ENCODE measurements at regions of chr20 and their contacts with region 1.

Region 1: GRCh38 chr20:20860078-20860806 is 147.8 kb upstream of the RALGAPA2 start:
- DNase-seq: peak; percentile 87 to 92
- H3K4me3 ChIP-seq: no peak overlapping the region
- H3K4me3 Mint-ChIP-seq: no peak overlapping the region
- H3K27ac Mint-ChIP-seq: no peak overlapping the region
- H3K4me1 ChIP-seq: no peaks in the 10 kb centered on the region; the same call in 1 of the 2 replicates
- H3K4me1 Mint-ChIP-seq: no peaks in the 10 kb centered on the region
- H3K27me3 ChIP-seq: no peaks in the 10 kb centered on the region
- H3K27me3 Mint-ChIP-seq: peaks cover 4% of the 10 kb centered on the region
- CTCF ChIP-seq: peak; percentile 88 to 96

Region 2: DNA sequence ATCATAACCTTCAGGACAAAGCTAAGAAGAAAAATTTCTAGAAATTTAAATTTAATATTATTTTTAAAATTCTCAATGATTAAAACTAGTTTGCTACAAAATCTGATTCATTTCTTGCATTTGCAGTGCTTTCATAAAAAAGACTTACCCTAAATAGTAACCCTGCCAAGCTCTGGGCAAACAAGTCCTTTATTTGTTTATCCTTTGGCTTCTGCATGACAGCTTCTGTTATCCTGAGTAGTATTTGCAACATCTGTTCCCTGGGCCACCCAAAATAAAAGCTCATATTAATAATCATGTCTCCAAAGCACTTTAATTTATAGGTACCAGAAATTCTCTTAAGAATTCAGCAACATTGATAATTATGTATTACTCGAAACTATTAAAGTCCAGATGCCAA is 249.1 kb before region 1 on chr20:
- CTCF ChIA-PET with region 1: no interaction called
- POLR2A ChIA-PET with region 1: no interaction called
- intact Hi-C with region 1: no loop called
- DNase-seq: no peak
- H3K4me3 ChIP-seq: no peak overlapping the region
- H3K4me3 Mint-ChIP-seq: no peak overlapping the region
- H3K27ac Mint-ChIP-seq: no peak overlapping the region
- H3K4me1 ChIP-seq: peaks cover 9% of the 10 kb centered on the region; the same call in 1 of the 2 replicates
- H3K4me1 Mint-ChIP-seq: peaks cover 13% of the 10 kb centered on the region
- H3K27me3 ChIP-seq: no peaks in the 10 kb centered on the region
- H3K27me3 Mint-ChIP-seq: no peaks in the 10 kb centered on the region
- CTCF ChIP-seq: no peak

Region 3: DNA sequence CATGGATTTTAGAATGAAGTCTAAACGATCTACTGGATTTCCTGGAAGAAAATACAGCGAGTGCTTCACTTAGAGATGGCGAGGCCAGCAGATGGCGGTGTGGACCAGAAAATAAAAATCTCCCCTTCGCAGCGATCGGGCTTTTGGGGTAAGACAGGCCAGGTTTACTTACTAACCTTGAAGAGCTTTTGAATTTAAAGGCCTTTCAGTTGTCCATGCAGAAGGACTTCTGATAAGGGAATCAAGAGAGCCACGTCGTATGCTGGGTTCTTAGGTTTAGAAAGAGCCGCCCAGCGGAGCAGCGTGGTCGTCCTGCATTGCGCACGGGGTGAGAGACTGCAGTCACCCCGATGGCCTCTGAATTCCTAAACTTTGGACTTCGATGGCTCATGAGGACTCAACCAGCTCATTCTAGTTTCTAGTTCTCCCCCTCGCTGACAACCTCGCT is 22.6 kb before region 1 on chr20:
- CTCF ChIA-PET with region 1: interaction called, 11 read pairs
- POLR2A ChIA-PET with region 1: no interaction called
- intact Hi-C with region 1: loop called (anchors 1 kb)
- DNase-seq: peak; percentile 68 to 75
- H3K4me3 ChIP-seq: 0 out of 2 replicates have a peak overlapping the region, but pooled peaks have one; percentile 15
- H3K4me3 Mint-ChIP-seq: peak overlapping the region; percentile 5
- H3K27ac Mint-ChIP-seq: no peak overlapping the region
- H3K4me1 ChIP-seq: no peaks in the 10 kb centered on the region
- H3K4me1 Mint-ChIP-seq: peaks cover 6% of the 10 kb centered on the region
- H3K27me3 ChIP-seq: no peaks in the 10 kb centered on the region
- H3K27me3 Mint-ChIP-seq: peaks cover 7% of the 10 kb centered on the region
- CTCF ChIP-seq: peak; percentile 80 to 82

Region 4: DNA sequence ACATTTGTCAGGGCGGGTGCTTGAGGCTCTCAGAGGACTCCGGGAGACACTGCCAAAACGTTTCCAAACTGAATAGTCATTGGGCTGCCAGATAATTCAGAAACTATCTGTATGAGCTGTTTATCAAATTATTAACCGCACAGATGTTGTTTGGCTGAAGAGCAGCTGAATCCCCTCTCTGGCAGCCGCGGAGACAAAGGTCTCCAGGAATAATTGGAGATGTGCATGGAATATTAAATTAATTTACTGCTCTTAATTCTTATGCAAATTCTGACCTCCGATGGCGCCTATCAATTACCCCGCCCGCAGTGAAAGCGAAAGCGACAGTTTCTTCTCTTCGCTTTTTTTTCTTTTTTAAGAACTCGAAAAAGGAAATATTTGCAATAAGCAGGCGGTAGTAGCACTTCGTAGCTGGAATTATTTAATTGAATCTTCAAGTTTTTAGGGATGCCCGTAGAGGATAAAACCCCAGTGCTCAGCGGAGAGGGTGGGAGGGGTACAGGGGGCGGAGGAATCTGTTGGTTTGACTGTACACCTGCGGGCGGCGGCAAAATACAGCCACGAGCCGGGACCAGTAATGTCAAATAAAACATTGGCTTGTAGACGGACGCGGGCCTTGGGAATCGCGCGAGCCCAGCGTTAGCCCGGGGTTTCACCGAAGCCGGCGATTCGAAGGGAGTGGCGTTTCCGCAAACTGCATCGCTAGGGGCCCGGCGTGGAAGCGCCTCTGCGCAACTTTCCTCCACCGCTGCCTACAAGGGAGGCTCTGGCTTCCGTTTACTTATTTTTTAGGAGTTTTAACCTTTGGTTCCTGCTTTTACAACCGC is 239.7 kb after region 1 on chr20:
- CTCF ChIA-PET with region 1: interaction called, 7 read pairs
- POLR2A ChIA-PET with region 1: no interaction called
- intact Hi-C with region 1: loop called (anchors 1 kb)
- DNase-seq: peak; percentile 78 to 83
- H3K4me3 ChIP-seq: peak overlapping the region; percentile 56
- H3K4me3 Mint-ChIP-seq: peak overlapping the region; percentile 97
- H3K27ac Mint-ChIP-seq: peak overlapping the region; percentile 100
- H3K4me1 ChIP-seq: no peaks in the 10 kb centered on the region; the same call in 1 of the 2 replicates
- H3K4me1 Mint-ChIP-seq: peaks cover 6% of the 10 kb centered on the region
- H3K27me3 ChIP-seq: no peaks in the 10 kb centered on the region
- H3K27me3 Mint-ChIP-seq: peaks cover 4% of the 10 kb centered on the region
- CTCF ChIP-seq: no peak

Region 5: DNA sequence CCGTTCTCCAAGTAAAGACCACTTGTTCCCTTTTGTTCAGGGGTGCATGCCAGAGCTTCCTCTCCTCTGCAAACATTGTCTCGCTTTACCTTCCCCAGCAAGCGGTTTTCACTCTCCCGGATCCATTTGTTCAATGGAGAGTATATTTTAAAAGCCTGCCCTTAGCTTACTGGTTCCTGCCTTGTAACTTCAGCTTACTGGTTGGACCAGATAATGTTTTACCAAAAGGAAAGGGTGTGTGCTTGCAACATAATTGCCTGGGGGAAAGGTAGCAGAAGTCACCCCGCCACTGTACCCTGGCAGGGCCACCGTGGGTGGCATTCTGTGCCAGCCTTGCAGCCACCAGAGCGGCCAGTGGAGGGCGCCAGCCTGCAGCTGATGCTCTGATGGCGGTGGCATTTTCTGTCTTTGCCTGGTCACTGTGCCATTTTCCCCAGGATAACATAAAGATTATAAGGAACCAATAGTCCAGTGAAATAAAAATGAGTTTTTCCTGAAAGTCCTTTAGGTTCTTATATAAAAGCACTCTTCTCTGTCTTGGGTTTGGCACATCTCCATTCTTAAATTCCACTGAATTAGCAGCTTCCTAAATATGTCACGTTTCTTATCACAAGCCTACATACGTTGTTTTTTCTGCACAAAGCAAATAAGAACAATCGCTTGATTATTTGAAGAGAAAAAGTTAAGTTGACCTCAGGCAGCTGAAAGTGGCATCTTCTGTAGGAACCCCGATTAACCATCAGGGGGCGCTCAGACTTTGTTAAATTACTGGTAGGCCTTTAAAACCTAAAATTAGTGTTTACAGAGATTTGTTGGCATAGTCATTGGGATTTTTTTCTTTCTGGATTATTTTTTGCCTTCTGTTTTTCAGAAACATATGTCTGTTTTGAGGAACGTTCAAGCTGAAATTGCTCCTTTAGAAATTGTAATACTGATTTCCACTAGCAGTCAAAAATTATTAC is 375.5 kb after region 1 on chr20:
- CTCF ChIA-PET with region 1: interaction called, 4 read pairs
- POLR2A ChIA-PET with region 1: no interaction called
- intact Hi-C with region 1: loop called (anchors 2 kb)
- DNase-seq: peak; percentile 60 to 75
- H3K4me3 ChIP-seq: no peak overlapping the region
- H3K4me3 Mint-ChIP-seq: no peak overlapping the region
- H3K27ac Mint-ChIP-seq: no peak overlapping the region
- H3K4me1 ChIP-seq: no peaks in the 10 kb centered on the region
- H3K4me1 Mint-ChIP-seq: no peaks in the 10 kb centered on the region
- H3K27me3 ChIP-seq: no peaks in the 10 kb centered on the region
- H3K27me3 Mint-ChIP-seq: no peaks in the 10 kb centered on the region
- CTCF ChIP-seq: peak; percentile 70 to 87

Region 6: DNA sequence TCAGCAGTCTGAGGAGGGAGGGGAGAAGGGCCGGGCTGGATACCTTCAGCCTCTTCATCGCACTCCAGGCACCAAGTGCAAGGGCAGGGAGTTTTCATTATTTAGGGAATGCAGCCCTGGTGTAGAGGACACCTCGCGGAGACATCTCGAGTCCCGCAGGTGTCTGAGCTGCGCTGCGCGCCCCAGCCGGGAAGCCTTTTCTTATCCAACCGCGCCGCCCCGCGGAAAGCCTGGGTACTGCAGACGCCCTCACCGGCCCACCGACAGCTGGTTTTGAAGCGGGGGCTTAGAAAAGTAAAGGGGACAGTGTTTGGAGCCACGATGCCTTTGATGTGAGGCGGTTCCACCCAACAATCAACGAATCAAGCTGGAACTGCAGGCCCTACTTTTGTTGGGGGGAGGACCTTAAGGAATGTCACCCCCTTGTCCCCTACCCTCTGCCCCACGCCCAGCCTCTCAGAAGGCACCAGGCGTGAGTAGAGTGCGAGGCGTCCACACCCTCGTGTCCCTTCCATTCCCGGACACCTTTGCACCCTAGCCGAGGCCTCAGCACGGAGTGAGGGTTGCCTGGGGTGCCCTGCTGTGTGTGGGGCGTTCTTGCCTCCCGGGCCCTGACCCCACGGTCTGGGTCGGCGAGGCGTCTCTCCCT is 645.0 kb after region 1 on chr20:
- CTCF ChIA-PET with region 1: interaction called, 13 read pairs
- POLR2A ChIA-PET with region 1: no interaction called
- intact Hi-C with region 1: loop called (anchors 1 kb)
- DNase-seq: peak; percentile 74 to 89
- H3K4me3 ChIP-seq: peak overlapping the region; percentile 62
- H3K4me3 Mint-ChIP-seq: peak overlapping the region; percentile 47
- H3K27ac Mint-ChIP-seq: no peak overlapping the region
- H3K4me1 ChIP-seq: peaks cover 13% of the 10 kb centered on the region
- H3K4me1 Mint-ChIP-seq: no peaks in the 10 kb centered on the region
- H3K27me3 ChIP-seq: no peaks in the 10 kb centered on the region
- H3K27me3 Mint-ChIP-seq: peaks cover 3% of the 10 kb centered on the region
- CTCF ChIP-seq: peak; percentile 98 to 99